Endothelial cell of umbilical vein (primary cell): ENCODE measurements at regions of chr12 and their contacts with region 1.

Region 1: GRCh38 chr12:49740930-49741881 is at the start of gene TMBIM6:
- DNase-seq: peak; percentile 100
- H3K4me3 ChIP-seq: peak within 1 kb of the TSS; percentile 4 to 95 (median 56)
- H3K27ac ChIP-seq: peak within 1 kb of the TSS; percentile 78
- H3K4me1 ChIP-seq: peaks cover 11% of the 10 kb centered on the region
- H3K27me3 ChIP-seq: no peaks in the 10 kb centered on the region
- CTCF ChIP-seq: peak; percentile 94 to 96
- POLR2A ChIP-seq: peak; percentile 97
- total RNA-seq, gene TMBIM6: 393 and 395 TPM in 2 replicates

Region 2: GRCh38 chr12:49342066-49342913 is 398.9 kb before region 1 on chr12:
- CTCF ChIA-PET with region 1: no interaction called
- POLR2A ChIA-PET with region 1: no interaction called
- dilution Hi-C with region 1: no loop called
- intact Hi-C with region 1: loop called (anchors 10 kb)
- DNase-seq: peak; percentile 76
- H3K4me3 ChIP-seq: peak overlapping the region in 2 of 3 experiments; percentile 24 to 25
- H3K27ac ChIP-seq: no peak overlapping the region
- H3K4me1 ChIP-seq: peaks cover 31% of the 10 kb centered on the region
- H3K27me3 ChIP-seq: peaks cover 50 to 71% of the 10 kb centered on the region in 2 experiments
- CTCF ChIP-seq: peak; percentile 92 to 94
- POLR2A ChIP-seq: no peak

Region 3: DNA sequence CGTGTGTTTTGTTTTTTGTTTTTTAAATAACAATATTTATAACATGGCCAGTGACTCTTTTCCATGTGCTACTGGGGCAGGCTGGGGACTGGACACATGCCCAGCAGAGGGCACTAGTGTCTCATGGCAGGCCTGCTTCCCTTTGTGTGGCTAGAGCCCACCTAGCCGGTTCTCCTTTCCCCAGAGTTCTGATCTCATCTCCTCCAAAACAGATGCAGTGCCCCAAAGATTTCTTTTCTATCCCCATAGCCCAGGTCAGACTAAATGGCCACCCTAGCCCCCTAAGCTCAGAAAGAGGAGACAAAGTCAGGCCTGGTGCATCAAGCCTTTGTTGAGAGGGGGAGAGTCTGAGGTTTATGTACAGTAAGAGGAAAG is 96.6 kb before region 1 on chr12:
- CTCF ChIA-PET with region 1: interaction called, 14 read pairs
- POLR2A ChIA-PET with region 1: interaction called, 8 read pairs
- dilution Hi-C with region 1: no loop called
- intact Hi-C with region 1: loop called (anchors 1 kb)
- DNase-seq: peak; percentile 69
- H3K4me3 ChIP-seq: no peak overlapping the region
- H3K27ac ChIP-seq: peak overlapping the region; percentile 26
- H3K4me1 ChIP-seq: peaks cover 31% of the 10 kb centered on the region
- H3K27me3 ChIP-seq: no peaks in the 10 kb centered on the region
- CTCF ChIP-seq: peak; percentile 91 to 92
- POLR2A ChIP-seq: no peak

Region 4: GRCh38 chr12:49707128-49707811 is 33.9 kb before region 1 on chr12 and contains the start of gene FMNL3:
- CTCF ChIA-PET with region 1: interaction called, 14 read pairs
- POLR2A ChIA-PET with region 1: interaction called, 10 read pairs
- dilution Hi-C with region 1: no loop called
- intact Hi-C with region 1: loop called (anchors 1 kb)
- DNase-seq: peak; percentile 97
- H3K4me3 ChIP-seq: peak within 1 kb of the TSS; percentile 88 to 96 (median 93)
- H3K27ac ChIP-seq: peak within 1 kb of the TSS; percentile 85
- H3K4me1 ChIP-seq: peaks cover 36% of the 10 kb centered on the region
- H3K27me3 ChIP-seq: peaks cover 18 to 21% of the 10 kb centered on the region in 2 experiments
- CTCF ChIP-seq: peak; percentile 90 to 93
- POLR2A ChIP-seq: peak; percentile 23
- total RNA-seq, gene FMNL3: 93.2 and 93.3 TPM in 2 replicates

Region 5: GRCh38 chr12:49763006-49763591 is 21.9 kb after region 1 on chr12:
- CTCF ChIA-PET with region 1: interaction called, 9 read pairs
- POLR2A ChIA-PET with region 1: interaction called, 6 read pairs
- dilution Hi-C with region 1: no loop called
- intact Hi-C with region 1: loop called (anchors 1 kb)
- DNase-seq: peak; percentile 75
- H3K4me3 ChIP-seq: no peak overlapping the region
- H3K27ac ChIP-seq: peak overlapping the region; percentile 22
- H3K4me1 ChIP-seq: peaks cover 19% of the 10 kb centered on the region
- H3K27me3 ChIP-seq: no peaks in the 10 kb centered on the region
- CTCF ChIP-seq: peak; percentile 86 to 92
- POLR2A ChIP-seq: no peak

Region 6: GRCh38 chr12:49945394-49946080 is 204.3 kb after region 1 on chr12:
- CTCF ChIA-PET with region 1: no interaction called
- POLR2A ChIA-PET with region 1: no interaction called
- dilution Hi-C with region 1: no loop called
- intact Hi-C with region 1: no loop called
- DNase-seq: peak; percentile 89
- H3K4me3 ChIP-seq: no peak overlapping the region
- H3K27ac ChIP-seq: peak overlapping the region; percentile 49
- H3K4me1 ChIP-seq: peaks cover 11% of the 10 kb centered on the region
- H3K27me3 ChIP-seq: no peaks in the 10 kb centered on the region
- CTCF ChIP-seq: peak; percentile 96 to 97
- POLR2A ChIP-seq: no peak